ENCODE measurements at regions of chr9 and their contacts with region 1.

Region 1: GRCh38 chr9:97921959-97922724 is at the start of gene TRMO:
- DNase-seq: peak; percentile 100
- H3K4me3 ChIP-seq: peak within 1 kb of the TSS; percentile 69 to 81 (median 72)
- H3K27ac ChIP-seq: peak within 1 kb of the TSS; percentile 95 to 99 (median 96)
- H3K4me1 ChIP-seq: peaks cover 16 to 47% (median 27%) of the 10 kb centered on the region in 4 donors
- H3K27me3 ChIP-seq: peaks cover 0 to 7% (median 0%) of the 10 kb centered on the region in 4 donors
- CTCF ChIP-seq: peak; percentile 58 to 75 (median 64)
- EP300 ChIP-seq: no peak
- POLR2A ChIP-seq: peak; percentile 64
- total RNA-seq, gene TRMO: 16.6 to 22.7 (median 18.8) TPM

Region 2: DNA sequence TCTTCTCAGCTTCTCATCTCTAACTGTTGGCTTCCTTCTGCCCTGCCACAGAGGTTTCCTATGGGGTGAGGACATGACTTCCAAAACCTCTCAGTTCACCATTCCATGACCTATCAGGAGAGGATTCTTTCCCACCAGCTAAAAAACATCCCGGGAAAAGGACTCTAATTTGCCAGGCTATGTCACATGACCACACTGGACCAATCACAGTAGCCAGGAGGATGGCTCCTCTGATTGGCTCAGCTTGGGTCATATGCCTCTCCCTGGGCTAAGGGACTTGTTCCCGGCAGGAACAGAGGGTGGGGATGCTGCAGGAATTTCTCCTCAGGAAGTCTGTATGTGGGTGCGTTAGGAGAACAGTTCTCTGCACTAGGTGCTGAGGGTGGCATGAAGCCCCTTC is 184.7 kb before region 1 on chr9:
- intact Hi-C with region 1: no loop called
- DNase-seq: no peak
- H3K4me3 ChIP-seq: no peak overlapping the region
- H3K27ac ChIP-seq: no peak overlapping the region
- H3K4me1 ChIP-seq: peaks cover 13 to 15% (median 14%) of the 10 kb centered on the region in 4 donors
- H3K27me3 ChIP-seq: peaks cover 0 to 48% (median 0%) of the 10 kb centered on the region in 4 donors
- CTCF ChIP-seq: no peak
- EP300 ChIP-seq: no peak
- POLR2A ChIP-seq: no peak

Region 3: DNA sequence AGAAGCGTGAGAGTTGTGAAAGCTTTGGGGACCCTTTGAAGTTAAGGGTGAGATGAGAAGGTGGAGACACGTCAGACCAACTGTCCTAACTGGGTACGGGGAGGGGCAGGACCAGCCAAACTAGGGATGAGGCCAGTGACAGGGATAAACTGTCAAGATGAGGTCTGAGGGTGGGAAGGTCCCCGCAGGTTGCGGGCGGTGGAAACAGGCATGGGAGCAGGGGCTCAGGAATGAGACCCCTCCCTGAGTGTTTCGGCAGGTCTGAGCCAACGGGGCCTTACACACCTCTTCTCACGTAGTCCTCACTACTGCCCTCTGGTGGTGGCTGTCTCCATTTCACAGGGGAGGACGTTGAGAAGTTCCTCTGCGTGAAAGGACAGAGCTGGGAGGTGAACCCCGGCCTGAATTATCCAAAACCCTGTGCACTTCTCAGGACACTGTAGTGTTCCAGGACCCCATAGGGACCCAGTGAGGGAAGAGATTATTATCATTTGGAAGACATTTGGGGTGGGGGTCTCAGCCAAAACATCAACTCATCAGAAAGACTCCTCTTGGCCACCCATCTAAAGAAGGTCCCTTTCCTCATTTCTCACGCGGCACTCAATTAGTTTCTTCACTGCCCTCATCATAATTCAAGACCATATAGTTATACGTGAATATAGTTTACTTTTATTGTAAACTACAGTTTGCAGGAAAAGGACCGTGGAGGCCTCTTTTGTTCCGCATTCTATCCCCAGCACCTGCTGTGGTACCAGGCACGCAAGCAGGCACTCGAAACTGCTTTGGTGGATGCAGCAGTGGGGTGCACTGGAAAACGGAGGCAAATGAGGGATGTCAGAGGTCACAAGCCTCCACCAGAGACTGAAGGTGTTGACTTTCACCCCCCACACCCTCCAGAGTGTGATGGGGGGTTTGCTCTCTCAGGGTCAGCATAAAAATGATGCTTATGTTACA is 112.7 kb after region 1 on chr9:
- intact Hi-C with region 1: loop called (anchors 1 kb)
- DNase-seq: peak; percentile 98
- H3K4me3 ChIP-seq: peak overlapping the region in 2 of 4 donors; percentile 20 to 24
- H3K27ac ChIP-seq: no peak overlapping the region
- H3K4me1 ChIP-seq: peaks cover 0 to 10% (median 6%) of the 10 kb centered on the region in 4 donors
- H3K27me3 ChIP-seq: no peaks in the 10 kb centered on the region
- CTCF ChIP-seq: peak; percentile 78 to 89 (median 85)
- EP300 ChIP-seq: no peak
- POLR2A ChIP-seq: no peak

Region 4: DNA sequence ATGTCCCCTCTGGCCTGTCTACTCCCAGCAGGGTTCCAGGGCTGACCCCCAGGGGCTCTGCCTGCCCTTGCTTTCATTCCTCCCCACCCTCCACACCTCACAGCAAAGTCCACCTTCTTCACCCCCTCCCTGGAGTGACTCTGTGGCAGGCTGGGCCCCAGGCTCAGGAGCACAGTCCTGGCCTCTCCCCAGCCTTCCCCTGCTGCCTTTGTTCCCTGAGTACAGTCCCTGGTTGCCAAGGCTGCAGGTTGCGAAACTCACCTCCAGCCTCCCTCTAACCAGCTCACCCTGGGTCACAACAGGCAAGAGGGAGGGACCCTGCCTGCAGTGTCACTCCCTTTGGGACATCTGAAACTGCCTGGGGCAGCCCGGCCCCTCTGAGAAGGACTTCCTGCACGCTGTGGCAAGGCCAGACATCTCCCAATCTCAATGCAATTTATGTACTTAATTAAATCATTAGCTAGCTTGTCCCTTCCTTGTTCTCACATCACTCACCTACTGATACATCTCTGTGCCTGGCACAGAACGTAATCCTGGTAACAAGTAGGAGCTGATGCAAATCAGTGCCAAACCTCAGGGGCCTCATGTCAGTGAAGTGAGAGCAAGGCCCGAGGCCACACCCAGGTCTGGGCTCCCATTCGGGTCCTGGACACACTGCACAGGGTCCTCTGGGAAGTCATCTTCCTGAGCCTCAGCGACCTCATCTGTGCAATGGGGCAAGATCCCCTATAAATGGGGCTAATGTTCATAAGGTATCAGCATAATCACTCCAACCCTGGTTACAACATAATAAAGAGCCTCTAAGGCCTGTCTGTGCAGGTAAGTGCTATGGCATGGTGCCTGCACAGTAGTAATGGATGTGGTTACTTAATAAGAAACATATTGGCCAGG is 224.2 kb after region 1 on chr9:
- intact Hi-C with region 1: no loop called
- DNase-seq: no peak
- H3K4me3 ChIP-seq: no peak overlapping the region
- H3K27ac ChIP-seq: no peak overlapping the region
- H3K4me1 ChIP-seq: no peaks in the 10 kb centered on the region
- H3K27me3 ChIP-seq: peaks cover 0 to 3% (median 0%) of the 10 kb centered on the region in 4 donors
- CTCF ChIP-seq: no peak
- EP300 ChIP-seq: no peak
- POLR2A ChIP-seq: no peak

Region 5: GRCh38 chr9:98796364-98797101 is 874.4 kb after region 1 on chr9 and contains the start of gene ANKS6:
- intact Hi-C with region 1: loop called (anchors 10 kb)
- DNase-seq: no peak
- H3K4me3 ChIP-seq: peak within 1 kb of the TSS; percentile 66 to 96 (median 82)
- H3K27ac ChIP-seq: peak within 1 kb of the TSS; percentile 84 to 89 (median 88)
- H3K4me1 ChIP-seq: peaks cover 7 to 59% (median 45%) of the 10 kb centered on the region in 4 donors
- H3K27me3 ChIP-seq: no peaks in the 10 kb centered on the region
- CTCF ChIP-seq: peak; percentile 37 to 65 (median 62)
- EP300 ChIP-seq: no peak
- POLR2A ChIP-seq: no peak
- total RNA-seq, gene ANKS6: 15.8 to 31.4 (median 23.6) TPM

Measured in esophagus muscularis mucosa (tissue), 4 donors.